Esophagus muscularis mucosa (tissue), 4 donors: ENCODE measurements at regions of chr2 and their contacts with region 1.

Region 1: GRCh38 chr2:135913727-135914365 is 37.6 kb upstream of the MCM6 start:
- DNase-seq: no peak
- H3K4me3 ChIP-seq: no peak overlapping the region
- H3K27ac ChIP-seq: no peak overlapping the region
- H3K4me1 ChIP-seq: no peaks in the 10 kb centered on the region
- H3K27me3 ChIP-seq: no peaks in the 10 kb centered on the region
- CTCF ChIP-seq: peak; percentile 72 to 80 (median 73)
- EP300 ChIP-seq: no peak
- POLR2A ChIP-seq: no peak

Region 2: DNA sequence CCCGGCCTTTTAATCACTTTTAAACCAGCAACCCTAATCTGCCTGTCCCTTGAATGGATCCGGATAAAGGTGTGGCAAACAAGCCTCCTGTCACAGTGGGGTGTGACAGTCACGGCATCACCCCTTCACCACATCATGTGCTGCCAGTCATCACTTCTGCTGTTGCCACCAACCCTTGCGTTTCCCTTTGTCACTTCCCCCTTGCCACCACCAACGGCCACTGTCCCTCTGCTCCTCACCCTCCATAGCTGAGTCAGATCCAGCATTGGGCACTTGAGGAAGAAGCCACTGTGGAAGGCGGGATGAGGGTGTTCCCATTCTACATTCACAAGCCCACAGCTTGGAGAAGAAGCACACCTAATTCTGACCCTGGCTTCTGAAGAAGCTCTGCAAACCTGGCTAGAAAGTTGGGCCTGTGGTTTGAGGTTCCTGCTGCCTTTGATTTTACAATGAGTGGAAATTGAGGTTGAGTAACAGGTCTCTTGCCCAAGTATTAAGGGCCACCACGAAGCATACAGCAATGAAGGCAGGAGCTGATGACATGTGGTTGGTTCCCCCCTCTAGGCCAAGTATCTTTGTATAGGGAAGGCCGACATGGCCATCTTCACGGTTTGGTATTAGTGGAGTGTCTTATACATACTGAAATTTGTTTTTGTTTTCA is 94.5 kb after region 1 on chr2:
- intact Hi-C with region 1: no loop called
- DNase-seq: peak; percentile 93
- H3K4me3 ChIP-seq: no peak overlapping the region
- H3K27ac ChIP-seq: no peak overlapping the region
- H3K4me1 ChIP-seq: peaks cover 0 to 18% (median 8%) of the 10 kb centered on the region in 4 donors
- H3K27me3 ChIP-seq: no peaks in the 10 kb centered on the region
- CTCF ChIP-seq: no peak
- EP300 ChIP-seq: no peak
- POLR2A ChIP-seq: no peak

Region 3: DNA sequence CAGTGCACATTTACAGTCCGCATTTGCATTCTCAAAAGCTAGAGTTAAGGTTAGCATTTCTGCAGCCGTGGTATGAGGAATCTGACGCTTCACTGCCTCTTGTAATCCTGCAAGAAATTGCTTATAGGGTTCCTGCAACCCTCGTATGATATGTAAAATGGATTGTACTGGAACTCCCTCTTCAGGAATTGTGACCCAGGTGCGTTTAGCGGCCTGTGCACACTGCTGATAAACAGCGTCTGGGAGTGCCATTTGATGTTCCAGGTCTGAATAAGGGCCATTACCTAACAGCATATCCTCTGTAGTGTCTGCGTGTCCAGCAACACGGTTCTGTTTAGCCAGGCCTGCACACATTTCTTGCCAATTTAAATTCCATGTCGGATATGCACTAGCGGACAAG is 161.6 kb after region 1 on chr2:
- intact Hi-C with region 1: loop called (anchors 10 kb)
- DNase-seq: no peak
- H3K4me3 ChIP-seq: no peak overlapping the region
- H3K27ac ChIP-seq: no peak overlapping the region
- H3K4me1 ChIP-seq: peaks cover 0 to 12% (median 6%) of the 10 kb centered on the region in 4 donors
- H3K27me3 ChIP-seq: no peaks in the 10 kb centered on the region
- CTCF ChIP-seq: peak; percentile 16 to 35 (median 28)
- EP300 ChIP-seq: no peak
- POLR2A ChIP-seq: no peak